Heart left ventricle (tissue), 16 donors: ENCODE measurements at regions of chr7 and their contacts with region 1.

Region 1: DNA sequence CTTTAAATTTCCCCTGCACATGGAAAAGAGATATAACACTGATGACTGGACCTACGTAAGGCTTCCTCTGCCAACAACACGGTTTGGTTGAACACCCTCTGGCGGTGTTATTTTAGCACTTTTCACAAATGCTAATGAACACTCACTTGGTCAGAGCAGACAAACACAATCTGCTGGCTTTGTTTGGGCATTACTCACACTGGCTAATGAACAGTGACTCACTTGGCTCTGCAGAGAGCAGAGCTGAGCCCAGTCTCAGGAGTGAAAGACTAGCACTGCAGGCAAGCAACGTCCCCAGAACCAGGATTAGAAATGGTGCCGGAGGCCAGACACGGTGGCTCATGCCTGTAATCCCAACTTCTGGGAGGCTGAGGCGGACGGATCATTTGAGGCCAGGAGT is 430.8 kb downstream of the PLXNA4 start:
- DNase-seq: peak in 3 of 5 donors; percentile 20 to 54 (median 51)
- ATAC-seq: peak; percentile 37 to 95 (median 82)
- H3K4me3 ChIP-seq: no peak overlapping the region
- H3K27ac ChIP-seq: no peak overlapping the region
- H3K4me1 ChIP-seq: peaks cover 0 to 18% (median 5%) of the 10 kb centered on the region in 12 donors
- H3K27me3 ChIP-seq: no peaks in the 10 kb centered on the region
- CTCF ChIP-seq: peak in 2 of 12 donors; percentile 10 to 22
- POLR2A ChIP-seq: no peak

Region 2: GRCh38 chr7:132080967-132081668 is 64.3 kb before region 1 on chr7:
- intact Hi-C with region 1: loop called in 1 of 10 experiments (anchors 5 kb)
- DNase-seq: no peak
- ATAC-seq: peak in 3 of 4 donors; percentile 36 to 75 (median 61)
- H3K4me3 ChIP-seq: no peak overlapping the region
- H3K27ac ChIP-seq: no peak overlapping the region
- H3K4me1 ChIP-seq: peaks cover 0 to 24% (median 12%) of the 10 kb centered on the region in 12 donors
- H3K27me3 ChIP-seq: peaks cover 0 to 4% (median 0%) of the 10 kb centered on the region in 9 donors
- CTCF ChIP-seq: no peak
- POLR2A ChIP-seq: no peak